Left ventricle myocardium superior (tissue), 1 donor: ENCODE measurements at regions of chr15 and their contacts with region 1.

Region 1: DNA sequence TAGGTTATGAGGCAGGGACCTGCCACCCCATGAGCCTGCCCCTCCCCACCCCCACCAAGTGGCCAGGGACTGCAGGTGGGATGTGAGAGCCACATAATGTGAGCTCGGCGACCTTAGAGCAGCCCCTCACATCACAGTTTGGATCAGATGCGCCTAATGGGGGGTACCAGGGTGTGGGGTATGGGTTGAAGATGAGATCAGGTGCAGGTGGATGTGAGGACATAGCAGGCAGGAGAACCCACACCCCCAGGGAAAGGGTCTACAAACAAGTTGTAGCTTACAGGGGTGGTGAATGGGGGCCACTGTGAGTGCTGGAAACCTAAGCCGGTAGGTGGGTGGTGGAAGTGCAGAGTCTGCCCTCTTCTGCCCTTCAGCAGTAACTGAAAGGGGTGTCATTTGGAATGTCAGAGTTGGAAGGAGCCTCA is 94.0 kb downstream of the CORO2B start:
- DNase-seq: no peak
- ATAC-seq: peak; percentile 26

Region 2: DNA sequence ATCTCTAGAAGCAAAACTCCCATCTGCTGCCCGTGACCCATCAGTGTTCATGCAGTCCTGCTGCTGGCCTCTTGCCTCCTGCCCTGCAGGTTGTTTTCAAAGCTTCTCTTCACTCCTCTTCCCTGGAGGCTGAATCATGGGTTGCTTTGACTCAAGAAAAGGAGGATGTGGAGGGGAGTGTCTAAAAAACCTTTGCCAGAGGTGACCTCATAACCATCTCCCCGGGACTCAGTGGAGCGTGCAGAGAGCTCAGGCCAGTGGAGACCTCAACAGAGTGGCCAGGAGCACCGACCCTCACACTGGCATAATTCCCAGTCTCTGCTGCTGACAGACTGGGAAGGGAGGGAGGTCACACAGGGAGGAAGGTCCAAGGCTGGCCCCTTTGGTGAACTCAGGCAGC is 179.9 kb before region 1 on chr15:
- intact Hi-C with region 1: no loop called
- DNase-seq: peak; percentile 67
- ATAC-seq: peak; percentile 94

Region 3: DNA sequence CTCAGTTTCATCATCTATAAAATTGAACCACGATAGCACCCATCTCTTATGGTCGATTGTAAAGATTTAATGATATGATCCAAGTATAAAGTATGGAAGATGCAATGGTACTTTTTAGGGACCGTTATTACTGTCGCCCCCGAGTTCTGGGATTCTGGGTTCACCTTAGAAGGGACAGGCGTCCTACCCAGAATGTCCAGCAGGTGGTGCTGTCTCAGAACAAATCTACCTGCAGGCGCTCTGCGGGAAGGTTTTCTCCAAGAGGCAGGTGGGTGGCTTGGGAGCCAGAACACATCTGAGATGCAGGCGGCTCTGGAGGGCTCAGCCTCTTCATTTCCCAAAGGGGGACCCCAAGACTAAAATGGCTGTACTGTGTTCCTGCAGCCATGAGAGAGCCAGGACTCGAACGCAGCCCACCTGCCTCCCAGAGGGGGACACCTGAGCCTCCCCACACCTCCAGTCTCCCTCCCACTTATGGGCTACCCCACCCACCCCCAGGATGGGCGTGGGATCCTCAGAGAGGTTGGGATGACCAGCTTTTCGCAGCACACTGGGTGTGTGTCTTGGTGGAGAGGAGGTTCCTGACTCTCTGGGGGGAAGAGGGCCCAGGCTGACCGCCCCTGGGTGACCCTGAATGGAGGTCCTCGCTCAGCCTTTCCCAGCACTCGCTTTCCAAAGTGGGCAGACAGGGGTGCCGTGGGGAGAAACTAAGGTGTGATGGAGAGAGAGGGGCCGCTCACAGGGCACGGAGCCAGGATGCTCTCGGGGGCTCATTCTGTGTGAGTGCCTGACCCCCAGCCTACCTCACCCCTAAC is 122.1 kb before region 1 on chr15:
- intact Hi-C with region 1: loop called (anchors 5 kb)
- DNase-seq: peak; percentile 83
- ATAC-seq: peak; percentile 45

Region 4: DNA sequence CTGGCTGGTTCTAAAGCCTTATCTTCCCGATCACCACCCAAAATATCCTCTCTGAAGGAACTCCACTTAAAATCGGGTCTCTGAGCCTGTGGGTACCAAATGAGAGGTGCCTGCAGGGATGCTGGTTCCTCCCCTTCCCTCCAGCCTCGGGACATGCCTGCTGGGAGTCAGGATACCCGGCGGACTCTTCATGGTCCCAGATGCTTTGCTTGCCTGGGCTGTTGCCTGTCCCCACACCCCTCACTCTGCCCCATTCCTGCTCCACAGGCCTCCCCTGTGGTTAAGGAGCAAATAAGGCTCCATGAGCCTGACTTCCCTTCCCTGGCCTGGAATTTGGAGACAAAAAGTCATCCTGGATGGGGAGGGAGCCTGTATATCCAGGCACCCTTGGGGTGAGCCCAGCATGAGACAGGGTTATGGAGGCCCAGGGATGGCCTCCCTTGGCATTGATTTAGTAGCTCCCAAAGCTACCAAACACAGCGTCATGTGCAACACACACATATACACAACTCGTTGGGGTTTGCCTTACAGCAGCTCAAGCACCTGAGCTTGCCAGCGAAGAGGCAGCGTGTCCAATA is 106.3 kb before region 1 on chr15:
- intact Hi-C with region 1: loop called (anchors 5 kb)
- DNase-seq: no peak
- ATAC-seq: peak; percentile 14

Region 5: DNA sequence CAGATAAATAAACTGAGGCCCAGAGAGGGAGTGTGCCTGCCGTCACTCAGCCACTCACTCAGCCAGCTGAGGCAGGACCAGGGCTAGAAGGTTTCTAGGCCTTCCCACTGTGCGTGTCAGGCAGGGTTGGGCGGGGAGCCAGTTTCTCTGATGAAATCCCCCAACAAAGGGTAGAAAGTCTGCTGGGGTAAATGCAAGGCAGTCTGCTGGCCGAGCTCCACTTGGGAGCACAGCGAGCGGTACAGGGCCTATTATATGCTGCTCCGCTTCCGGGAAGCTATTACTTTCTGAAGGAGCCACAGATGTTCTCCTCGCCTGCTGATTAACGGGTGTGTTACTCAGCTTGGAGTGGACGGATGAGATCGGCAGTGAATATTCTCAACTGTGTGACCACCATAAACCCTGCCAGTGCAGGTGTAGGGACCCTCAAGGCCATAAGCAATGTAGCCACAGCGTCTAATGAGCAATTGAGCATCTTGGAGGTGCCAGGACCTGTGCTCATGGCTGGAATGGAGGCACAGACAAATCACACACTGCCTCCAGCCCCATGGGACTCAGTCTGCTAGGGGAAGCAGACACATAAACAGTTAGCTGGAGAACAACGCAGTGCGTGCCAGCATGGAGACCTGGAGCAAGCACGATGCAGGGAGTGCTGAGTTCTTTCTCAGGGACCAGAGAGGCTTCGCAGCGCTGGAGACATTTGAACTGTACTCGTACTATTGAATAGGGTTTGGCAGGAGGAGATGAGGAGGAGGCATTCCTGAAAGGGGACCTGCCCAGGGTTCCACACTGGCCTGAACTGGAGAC is 51.9 kb before region 1 on chr15:
- intact Hi-C with region 1: no loop called
- DNase-seq: peak; percentile 93
- ATAC-seq: peak; percentile 88

Region 6: GRCh38 chr15:68820295-68821189 is 147.7 kb after region 1 on chr15 and contains the start of gene ANP32A:
- intact Hi-C with region 1: no loop called
- DNase-seq: peak; percentile 98
- ATAC-seq: peak; percentile 80
- total RNA-seq, gene ANP32A: 138 TPM

Region 7: GRCh38 chr15:68875377-68876116 is 202.8 kb after region 1 on chr15:
- intact Hi-C with region 1: loop called (anchors 10 kb)
- DNase-seq: peak; percentile 96
- ATAC-seq: peak; percentile 97